ENCODE measurements at regions of chr10 and their contacts with region 1.

Region 1: GRCh38 chr10:69957886-69958555 is 94.6 kb upstream of the MACROH2A2 start:
- DNase-seq: peak; percentile 52
- ATAC-seq: peak; percentile 74
- H3K4me3 Mint-ChIP-seq: no peak overlapping the region
- H3K27ac Mint-ChIP-seq: no peak overlapping the region
- H3K4me1 Mint-ChIP-seq: no peaks in the 10 kb centered on the region
- H3K27me3 Mint-ChIP-seq: peaks cover 13% of the 10 kb centered on the region

Region 2: DNA sequence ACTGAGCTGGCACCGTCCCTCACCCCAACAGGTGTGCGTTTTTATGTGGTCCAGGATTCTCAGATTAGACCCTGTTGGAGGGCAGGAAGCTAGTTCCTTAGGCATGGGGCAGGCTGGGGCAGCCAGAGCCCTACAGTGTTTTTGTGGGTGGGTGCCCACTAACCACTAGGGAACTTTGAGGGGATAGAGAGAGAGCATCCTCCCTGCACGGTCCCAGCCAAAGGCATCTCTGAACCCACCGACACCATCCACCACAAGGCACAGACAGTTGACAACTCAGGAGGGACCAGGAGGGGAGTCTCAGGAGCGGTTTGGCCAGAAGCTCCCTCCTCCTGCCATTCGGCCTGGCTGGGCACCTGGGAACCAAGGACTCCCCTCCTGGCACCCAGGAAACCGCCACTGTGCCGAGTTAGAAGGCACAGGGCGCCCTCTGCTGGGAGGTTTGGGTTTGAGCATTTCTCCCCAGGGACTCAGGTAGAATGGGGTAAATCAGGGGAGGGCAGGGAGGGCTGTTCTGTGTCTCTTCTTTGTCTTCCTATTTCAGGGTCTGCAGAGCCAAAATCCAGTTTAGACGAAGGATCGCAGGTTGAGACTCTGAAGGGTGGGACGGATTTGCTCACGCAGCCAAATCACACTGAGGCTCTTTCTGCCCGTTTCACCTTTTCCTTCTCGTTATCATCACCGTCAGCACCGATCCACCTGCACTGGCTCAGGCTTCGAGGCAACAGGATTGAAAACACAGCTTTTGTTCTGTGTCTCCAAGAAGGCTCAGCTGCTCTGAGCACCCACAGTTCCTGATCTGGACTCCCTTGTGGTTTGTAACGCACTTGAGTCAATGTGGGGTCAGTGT is 241.1 kb before region 1 on chr10:
- CTCF ChIA-PET with region 1: no interaction called
- DNase-seq: peak; percentile 67
- ATAC-seq: peak; percentile 55
- H3K4me3 Mint-ChIP-seq: no peak overlapping the region
- H3K27ac Mint-ChIP-seq: no peak overlapping the region
- H3K4me1 Mint-ChIP-seq: no peaks in the 10 kb centered on the region
- H3K27me3 Mint-ChIP-seq: peaks cover 6% of the 10 kb centered on the region

Region 3: GRCh38 chr10:69731184-69731583 is 226.8 kb before region 1 on chr10:
- CTCF ChIA-PET with region 1: no interaction called
- DNase-seq: no peak
- ATAC-seq: no peak
- H3K4me3 Mint-ChIP-seq: no peak overlapping the region
- H3K27ac Mint-ChIP-seq: no peak overlapping the region
- H3K4me1 Mint-ChIP-seq: peaks cover 21% of the 10 kb centered on the region
- H3K27me3 Mint-ChIP-seq: peaks cover 24% of the 10 kb centered on the region

Region 4: GRCh38 chr10:69972981-69973397 is 15.0 kb after region 1 on chr10:
- CTCF ChIA-PET with region 1: interaction called, 10 read pairs
- DNase-seq: no peak
- ATAC-seq: no peak
- H3K4me3 Mint-ChIP-seq: no peak overlapping the region
- H3K27ac Mint-ChIP-seq: no peak overlapping the region
- H3K4me1 Mint-ChIP-seq: peaks cover 9% of the 10 kb centered on the region
- H3K27me3 Mint-ChIP-seq: peaks cover 58% of the 10 kb centered on the region

Measured in activated CD8-positive, alpha-beta memory T cell treated with anti-CD3 and anti-CD28 coated beads, Interleukin-2, amount 10 ng/mL, durations not matched to agents 7 days and 5 days (primary cell).